CD4-positive, alpha-beta T cell (primary cell): ENCODE measurements at regions of chr10 and their contacts with region 1.

Region 1: DNA sequence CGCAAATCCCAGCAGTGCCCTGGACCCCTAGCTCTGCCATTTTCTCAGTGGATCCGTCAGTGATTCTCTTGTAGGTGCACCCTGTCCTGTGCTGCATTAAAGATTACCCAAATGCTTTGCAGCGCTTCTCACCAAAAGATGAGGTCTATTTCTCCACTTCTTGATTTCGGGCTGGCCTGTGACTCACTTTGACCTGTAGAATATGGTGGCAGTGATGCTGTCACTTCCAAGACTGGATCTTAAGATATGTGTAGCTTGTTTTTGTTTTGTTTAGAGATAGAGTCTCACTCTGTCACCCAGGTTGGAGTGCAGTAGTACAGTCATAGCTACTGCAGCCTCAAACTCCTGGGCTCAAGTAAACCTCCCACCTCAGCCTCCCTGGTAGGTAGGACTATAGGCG is 37.0 kb upstream of the ZMIZ1 start:
- DNase-seq: no peak
- ATAC-seq: no peak
- H3K4me3 ChIP-seq: no peak overlapping the region
- H3K4me3 Mint-ChIP-seq: no peak overlapping the region
- H3K27ac ChIP-seq: no peak overlapping the region
- H3K27ac Mint-ChIP-seq: no peak overlapping the region
- H3K4me1 ChIP-seq: peaks cover 18% of the 10 kb centered on the region
- H3K4me1 Mint-ChIP-seq: peaks cover 15% of the 10 kb centered on the region
- H3K27me3 ChIP-seq: no peaks in the 10 kb centered on the region
- H3K27me3 Mint-ChIP-seq: no peaks in the 10 kb centered on the region
- CTCF ChIP-seq: no peak

Region 2: DNA sequence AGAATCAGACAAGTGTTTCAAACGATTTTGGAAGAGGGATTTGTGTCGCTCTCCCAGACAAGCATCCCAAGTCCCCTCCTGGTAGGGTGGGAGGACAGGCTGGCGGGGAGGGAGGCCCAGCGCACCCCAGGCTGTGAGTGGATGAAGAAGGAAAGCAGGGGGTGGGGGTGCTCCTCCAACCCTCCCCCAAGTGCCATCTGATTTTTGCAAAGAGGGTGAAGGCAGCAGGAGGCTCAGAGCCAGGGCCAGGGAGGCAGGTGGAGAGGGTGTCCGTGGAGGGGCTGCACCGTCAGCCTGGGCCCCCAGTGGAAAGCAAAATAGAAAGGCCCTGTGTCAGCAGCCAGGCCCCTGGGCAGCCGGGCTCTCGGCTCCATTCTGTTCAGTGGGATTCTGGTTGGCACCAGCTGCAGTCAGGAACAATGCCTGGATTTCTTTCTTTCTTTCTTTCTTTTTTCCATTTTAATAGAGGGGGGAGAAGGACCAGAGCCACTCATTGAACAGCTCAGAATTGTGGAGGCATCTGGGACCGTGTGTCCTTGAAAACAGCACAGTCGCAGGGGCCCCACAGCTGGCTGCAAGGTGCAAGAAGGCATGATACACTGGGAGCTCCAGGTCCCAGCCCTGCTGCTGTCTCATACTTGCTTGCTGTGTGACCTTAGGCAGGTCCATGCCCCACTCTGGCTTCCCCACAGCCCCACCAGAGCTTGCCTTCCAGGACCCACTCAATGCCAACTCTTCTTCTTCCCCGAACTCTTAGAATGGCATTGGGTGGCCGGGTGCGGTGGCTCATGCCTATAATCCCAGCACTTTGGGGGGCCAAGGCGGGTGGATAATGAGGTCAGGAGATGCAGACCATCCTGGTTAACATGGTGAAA is 30.0 kb after region 1 on chr10:
- CTCF ChIA-PET with region 1: no interaction called
- POLR2A ChIA-PET with region 1: interaction called, 4 read pairs
- intact Hi-C with region 1: loop called in 1 of 2 experiments (anchors 1 kb)
- DNase-seq: peak in 1 of 14 experiments; percentile 1
- ATAC-seq: no peak
- H3K4me3 ChIP-seq: no peak overlapping the region
- H3K4me3 Mint-ChIP-seq: no peak overlapping the region
- H3K27ac ChIP-seq: no peak overlapping the region
- H3K27ac Mint-ChIP-seq: no peak overlapping the region
- H3K4me1 ChIP-seq: peaks cover 43% of the 10 kb centered on the region
- H3K4me1 Mint-ChIP-seq: peaks cover 41% of the 10 kb centered on the region
- H3K27me3 ChIP-seq: no peaks in the 10 kb centered on the region
- H3K27me3 Mint-ChIP-seq: no peaks in the 10 kb centered on the region
- CTCF ChIP-seq: no peak